Activated CD4-positive, alpha-beta memory T cell treated with anti-CD3 and anti-CD28 coated beads, Interleukin-2, amount 10 ng/mL, durations not matched to agents 7 days and 5 days (primary cell): ENCODE measurements at regions of chr15 and their contacts with region 1.

Region 1: GRCh38 chr15:65869127-65869953 is at the start of gene RAB11A:
- DNase-seq: peak; percentile 95
- H3K4me3 Mint-ChIP-seq: peak within 1 kb of the TSS; percentile 100
- H3K27ac Mint-ChIP-seq: peak within 1 kb of the TSS; percentile 97
- H3K4me1 Mint-ChIP-seq: peaks cover 30% of the 10 kb centered on the region
- H3K27me3 Mint-ChIP-seq: peaks cover 2% of the 10 kb centered on the region
- total RNA-seq, gene RAB11A: 192 to 193 TPM

Region 2: DNA sequence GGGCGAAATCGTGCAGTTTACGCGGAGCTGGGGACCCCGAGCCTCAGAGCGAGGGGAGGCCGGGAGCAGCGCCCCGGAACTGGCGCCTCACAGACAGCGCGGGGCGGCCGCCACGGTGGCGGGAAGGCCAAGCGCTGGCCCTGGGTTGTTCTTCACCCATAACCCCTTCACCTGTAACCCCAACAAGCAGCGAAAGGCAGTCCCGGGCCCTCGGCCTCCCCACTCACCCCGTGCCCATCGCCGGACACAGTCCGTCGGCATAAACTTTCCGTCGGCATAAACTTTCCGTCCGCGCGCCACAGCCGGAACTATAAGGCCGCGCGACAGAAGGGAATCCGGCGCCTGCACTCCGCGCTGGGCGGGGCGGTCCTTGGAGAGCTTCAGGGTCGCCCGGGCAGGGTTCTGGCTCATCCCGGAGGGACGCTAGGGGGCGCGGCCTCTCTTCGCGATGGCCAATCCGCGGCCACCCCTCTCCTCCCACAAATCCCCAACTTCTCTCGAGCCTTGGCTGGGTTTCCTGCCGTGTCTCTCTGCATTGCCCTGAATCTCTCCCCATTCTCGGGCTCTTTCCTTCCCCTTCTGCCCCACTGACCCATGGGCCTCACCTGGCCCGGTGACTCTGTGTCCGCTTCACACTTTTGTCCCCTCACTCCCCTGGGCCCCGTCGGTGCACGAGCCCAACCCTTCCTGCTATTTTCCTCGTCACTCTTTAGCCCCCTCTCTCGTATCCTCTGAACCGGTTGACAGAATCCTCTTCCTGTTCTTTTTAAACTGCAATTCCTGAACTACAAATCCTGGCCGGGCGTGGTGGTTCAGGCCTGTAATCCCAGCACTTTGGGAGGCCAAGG is 258.2 kb before region 1 on chr15 and contains the start of gene INTS14:
- CTCF ChIA-PET with region 1: interaction called, 15 read pairs
- POLR2A ChIA-PET with region 1: interaction called, 24 read pairs
- DNase-seq: peak; percentile 94
- H3K4me3 Mint-ChIP-seq: peak within 1 kb of the TSS; percentile 82
- H3K27ac Mint-ChIP-seq: peak within 1 kb of the TSS; percentile 76
- H3K4me1 Mint-ChIP-seq: peaks cover 40% of the 10 kb centered on the region
- H3K27me3 Mint-ChIP-seq: no peaks in the 10 kb centered on the region
- total RNA-seq, gene INTS14: 35.8 to 41.6 TPM

Region 3: DNA sequence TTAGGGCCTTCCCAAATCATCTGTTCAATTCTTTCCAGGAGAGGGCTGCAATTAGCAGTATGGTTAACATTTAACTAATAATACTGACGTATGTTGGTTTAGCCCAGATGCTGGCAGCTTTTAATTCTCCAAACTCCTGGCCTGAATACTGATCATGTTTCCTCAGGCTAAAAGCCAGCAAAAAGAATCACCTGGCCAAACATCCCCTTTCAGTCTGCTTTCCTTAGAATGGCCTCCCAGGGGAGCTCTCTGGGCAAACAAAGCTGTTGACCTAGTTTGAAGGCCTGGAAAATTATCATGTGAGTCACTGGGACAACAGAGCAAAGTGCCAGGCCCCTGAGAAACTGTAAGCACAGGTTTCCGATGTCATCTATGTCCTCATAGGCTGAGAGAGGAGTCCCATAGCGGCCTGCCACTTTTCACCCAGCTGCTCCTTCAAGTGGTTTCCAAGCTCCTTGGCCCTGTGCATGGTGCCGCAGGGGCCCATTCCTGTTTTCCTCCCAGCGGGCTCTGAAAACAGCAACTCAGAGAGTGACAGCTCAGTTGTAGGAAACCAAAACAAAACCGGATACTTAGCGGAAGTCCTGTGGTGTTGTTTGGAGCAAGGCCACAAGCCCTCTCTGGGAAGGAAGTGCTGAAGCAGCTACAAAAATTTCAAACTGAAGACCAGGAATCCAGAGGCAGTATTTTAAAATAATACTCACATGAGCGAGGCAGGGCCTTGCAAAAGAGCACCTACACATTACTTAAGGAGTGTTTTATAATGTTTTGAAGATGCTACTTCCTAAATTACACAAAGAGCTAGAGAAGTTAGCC is 36.6 kb before region 1 on chr15:
- CTCF ChIA-PET with region 1: interaction called, 8 read pairs
- POLR2A ChIA-PET with region 1: interaction called, 31 read pairs
- DNase-seq: peak; percentile 69
- H3K4me3 Mint-ChIP-seq: peak overlapping the region; percentile 61
- H3K27ac Mint-ChIP-seq: peak overlapping the region; percentile 98
- H3K4me1 Mint-ChIP-seq: peaks cover 56% of the 10 kb centered on the region
- H3K27me3 Mint-ChIP-seq: no peaks in the 10 kb centered on the region

Region 4: GRCh38 chr15:65856821-65857455 is 12.4 kb before region 1 on chr15:
- CTCF ChIA-PET with region 1: interaction called, 26 read pairs
- POLR2A ChIA-PET with region 1: interaction called, 7 read pairs
- DNase-seq: peak; percentile 83
- H3K4me3 Mint-ChIP-seq: no peak overlapping the region
- H3K27ac Mint-ChIP-seq: no peak overlapping the region
- H3K4me1 Mint-ChIP-seq: peaks cover 11% of the 10 kb centered on the region
- H3K27me3 Mint-ChIP-seq: peaks cover 4% of the 10 kb centered on the region

Region 5: DNA sequence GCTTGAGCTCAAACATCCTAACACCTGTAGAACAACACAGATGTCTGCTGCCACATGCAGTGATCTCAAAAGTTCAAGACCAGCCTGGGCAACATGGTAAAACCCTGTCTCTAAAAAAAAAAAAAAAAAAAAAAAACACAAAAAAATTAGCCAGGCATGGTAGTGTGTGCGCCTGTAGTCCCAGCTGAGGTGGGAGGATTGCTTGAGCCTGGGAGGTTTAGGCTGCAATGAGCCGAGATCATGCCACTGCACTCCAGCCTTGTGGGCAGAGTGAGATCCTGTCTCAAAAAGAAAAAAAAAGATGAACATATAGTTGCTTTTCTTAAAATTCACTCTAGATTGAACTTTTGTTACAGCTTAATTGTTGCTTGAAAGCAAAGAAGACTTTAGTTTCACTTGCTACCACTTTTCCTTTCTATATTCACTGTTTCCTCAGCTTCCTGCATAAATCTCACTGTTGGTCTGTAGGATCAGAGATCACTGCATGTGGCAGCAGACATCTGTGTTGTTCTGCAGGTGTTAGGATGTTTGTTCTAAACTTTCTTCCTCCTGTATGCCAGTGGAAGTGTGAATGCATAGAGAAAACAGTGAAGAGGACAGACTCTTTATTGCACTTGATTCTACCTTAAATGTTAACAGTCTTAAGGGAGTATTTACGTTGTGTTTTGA is 12.6 kb after region 1 on chr15:
- CTCF ChIA-PET with region 1: interaction called, 8 read pairs
- POLR2A ChIA-PET with region 1: interaction called, 22 read pairs
- DNase-seq: no peak
- H3K4me3 Mint-ChIP-seq: no peak overlapping the region
- H3K27ac Mint-ChIP-seq: peak overlapping the region; percentile 16
- H3K4me1 Mint-ChIP-seq: peaks cover 54% of the 10 kb centered on the region
- H3K27me3 Mint-ChIP-seq: no peaks in the 10 kb centered on the region

Region 6: GRCh38 chr15:65887565-65887964 is 18.2 kb after region 1 on chr15:
- CTCF ChIA-PET with region 1: interaction called, 11 read pairs
- POLR2A ChIA-PET with region 1: interaction called, 20 read pairs
- DNase-seq: peak; percentile 61
- H3K4me3 Mint-ChIP-seq: no peak overlapping the region
- H3K27ac Mint-ChIP-seq: peak overlapping the region; percentile 71
- H3K4me1 Mint-ChIP-seq: peaks cover 66% of the 10 kb centered on the region
- H3K27me3 Mint-ChIP-seq: no peaks in the 10 kb centered on the region

Region 7: DNA sequence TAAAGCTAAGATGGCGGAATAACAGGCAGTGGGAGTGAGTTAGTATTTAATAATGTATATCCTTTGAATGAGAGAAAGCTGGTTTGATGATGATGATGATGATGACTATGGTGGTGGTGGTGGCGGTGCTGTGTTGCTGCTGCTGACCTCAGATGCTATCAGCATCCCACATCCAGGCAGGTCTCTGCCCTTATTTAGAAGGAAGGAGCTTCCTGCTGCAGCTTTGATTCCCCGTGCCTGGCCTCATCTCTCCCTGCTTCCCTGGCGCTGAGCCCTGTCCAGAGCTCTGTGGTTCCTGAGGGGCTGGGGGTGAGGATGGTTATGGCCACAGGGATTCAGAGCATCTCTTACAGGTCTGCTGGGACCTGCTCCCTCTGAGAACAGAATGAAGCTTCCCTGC is 73.1 kb after region 1 on chr15:
- CTCF ChIA-PET with region 1: no interaction called
- POLR2A ChIA-PET with region 1: interaction called, 10 read pairs
- DNase-seq: peak; percentile 70
- H3K4me3 Mint-ChIP-seq: no peak overlapping the region
- H3K27ac Mint-ChIP-seq: no peak overlapping the region
- H3K4me1 Mint-ChIP-seq: peaks cover 19% of the 10 kb centered on the region
- H3K27me3 Mint-ChIP-seq: peaks cover 9% of the 10 kb centered on the region